Heart right ventricle (tissue), 16 donors: ENCODE measurements at regions of chr20 and their contacts with region 1.

Region 1: DNA sequence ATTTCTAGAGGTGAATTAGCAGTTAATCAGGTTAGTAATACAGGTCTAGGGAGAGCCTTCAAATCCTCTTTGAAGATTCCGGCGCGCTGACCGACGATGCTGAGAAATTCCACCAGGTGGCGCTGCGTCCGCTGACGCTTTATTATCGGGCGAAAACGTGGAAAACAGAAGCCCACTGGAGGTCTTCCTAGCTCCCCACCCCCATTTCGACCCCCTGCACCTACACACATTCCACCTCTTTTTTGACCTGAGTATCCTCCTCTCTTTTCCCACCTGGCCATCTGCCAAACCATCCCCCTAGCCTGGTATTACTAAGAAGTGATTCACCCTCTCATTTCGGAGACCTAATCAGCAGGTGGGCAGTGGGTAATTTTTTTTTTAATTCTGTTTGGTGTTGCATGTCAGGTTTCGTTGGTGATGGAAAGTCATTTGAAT is 65.4 kb upstream of the RIN2 start:
- DNase-seq: peak; percentile 42 to 61
- ATAC-seq: peak in 4 of 8 donors; percentile 12 to 39 (median 28)
- H3K4me3 ChIP-seq: peak overlapping the region in 1 of 10 donors; percentile 3
- H3K27ac ChIP-seq: no peak overlapping the region
- H3K4me1 ChIP-seq: peaks cover 0 to 47% (median 18%) of the 10 kb centered on the region in 9 donors
- H3K27me3 ChIP-seq: no peaks in the 10 kb centered on the region
- CTCF ChIP-seq: peak; percentile 88 to 95 (median 93)

Region 2: DNA sequence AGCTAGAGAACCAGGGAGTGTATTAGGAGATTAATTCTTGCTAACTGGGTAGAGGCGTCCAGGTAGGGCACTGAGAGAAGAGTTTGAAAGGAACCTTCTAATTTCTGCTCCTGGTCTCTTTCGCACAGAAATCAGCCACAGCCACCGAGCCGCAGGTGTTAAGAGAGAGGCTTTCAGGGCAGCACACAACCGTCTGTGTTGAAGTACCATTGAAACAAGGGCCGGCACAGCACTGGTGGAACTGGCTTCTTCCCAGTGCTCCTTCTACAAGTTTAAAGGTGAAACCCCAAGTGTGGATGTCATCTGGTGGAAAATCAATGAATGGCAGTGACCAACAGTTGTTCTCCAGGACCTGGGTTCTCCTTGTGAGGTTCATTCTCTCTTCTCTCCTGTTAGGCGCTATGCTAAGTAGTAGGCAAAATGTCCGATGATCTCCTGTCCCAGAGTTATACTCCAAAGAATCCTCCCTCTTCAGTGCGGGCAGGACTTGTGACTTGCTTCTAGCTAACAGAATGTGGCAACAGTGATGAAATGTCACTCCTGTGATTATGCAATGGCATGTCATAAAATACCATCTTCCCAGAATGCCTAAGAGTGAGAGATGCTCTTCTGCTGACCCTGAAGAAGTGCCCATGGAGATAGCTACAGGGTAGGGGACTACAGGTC is 50.4 kb after region 1 on chr20:
- intact Hi-C with region 1: loop called in 1 of 10 experiments (anchors 10 kb)
- DNase-seq: no peak
- ATAC-seq: peak in 1 of 8 donors; percentile 27
- H3K4me3 ChIP-seq: no peak overlapping the region
- H3K27ac ChIP-seq: no peak overlapping the region
- H3K4me1 ChIP-seq: peaks cover 0 to 10% (median 0%) of the 10 kb centered on the region in 9 donors
- H3K27me3 ChIP-seq: no peaks in the 10 kb centered on the region
- CTCF ChIP-seq: no peak

Region 3: DNA sequence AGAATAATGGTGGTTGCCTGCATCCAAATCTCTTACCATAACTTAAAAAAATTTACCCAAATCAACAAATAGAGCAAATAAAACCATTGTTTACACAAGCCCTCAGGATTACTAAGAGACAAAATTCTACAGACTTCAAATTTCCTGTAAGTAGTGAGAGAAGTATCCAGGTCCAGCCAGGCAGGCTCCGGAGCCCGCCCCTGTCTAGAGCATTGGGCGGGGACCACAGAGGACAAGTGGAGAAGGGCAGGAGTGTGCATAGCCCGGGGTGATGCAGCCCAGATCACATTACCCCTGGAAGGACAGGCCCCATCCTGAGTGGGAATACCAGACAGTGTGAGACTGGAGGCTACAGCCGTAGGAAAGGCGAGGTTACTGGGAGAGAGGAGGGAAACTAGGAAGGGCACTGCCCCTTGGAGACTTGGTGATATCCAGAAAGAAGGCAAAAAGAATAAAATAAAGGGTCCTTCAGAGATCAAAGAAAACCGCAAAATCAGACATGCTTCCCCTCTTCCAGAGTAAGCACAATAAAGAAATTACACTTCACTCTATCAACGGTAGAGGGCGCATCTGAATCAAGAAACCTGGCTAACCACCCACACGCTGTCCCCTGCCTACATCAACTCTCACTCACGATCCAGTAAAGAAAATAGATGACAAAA is 91.9 kb after region 1 on chr20:
- intact Hi-C with region 1: loop called in 6 of 10 experiments (anchors 5 to 10 kb)
- DNase-seq: peak; percentile 31 to 81
- ATAC-seq: peak; percentile 67 to 89 (median 82)
- H3K4me3 ChIP-seq: peak overlapping the region in 1 of 10 donors; percentile 1
- H3K27ac ChIP-seq: peak overlapping the region; percentile 32 to 91 (median 76)
- H3K4me1 ChIP-seq: peaks cover 28 to 67% (median 58%) of the 10 kb centered on the region in 9 donors
- H3K27me3 ChIP-seq: no peaks in the 10 kb centered on the region
- CTCF ChIP-seq: peak; percentile 59 to 87 (median 78)

Region 4: GRCh38 chr20:19889011-19889953 is 196.6 kb after region 1 on chr20:
- intact Hi-C with region 1: loop called in 6 of 10 experiments (anchors 2 to 10 kb)
- DNase-seq: peak; percentile 66 to 84
- ATAC-seq: peak; percentile 70 to 86 (median 80)
- H3K4me3 ChIP-seq: peak overlapping the region in 9 of 10 donors; percentile 30 to 58 (median 54)
- H3K27ac ChIP-seq: peak overlapping the region; percentile 72 to 98 (median 88)
- H3K4me1 ChIP-seq: peaks cover 29 to 97% (median 67%) of the 10 kb centered on the region in 9 donors
- H3K27me3 ChIP-seq: no peaks in the 10 kb centered on the region
- CTCF ChIP-seq: no peak

Region 5: GRCh38 chr20:19995220-19995863 is 302.6 kb after region 1 on chr20:
- intact Hi-C with region 1: loop called in 9 of 10 experiments (anchors 5 to 10 kb)
- DNase-seq: peak in 1 of 2 donors; percentile 47
- ATAC-seq: peak in 4 of 8 donors; percentile 27 to 54 (median 34)
- H3K4me3 ChIP-seq: no peak overlapping the region
- H3K27ac ChIP-seq: peak overlapping the region in 8 of 10 donors; percentile 15 to 81 (median 74)
- H3K4me1 ChIP-seq: peaks cover 42 to 99% (median 88%) of the 10 kb centered on the region in 9 donors
- H3K27me3 ChIP-seq: no peaks in the 10 kb centered on the region
- CTCF ChIP-seq: peak; percentile 59 to 88 (median 79)

Region 6: GRCh38 chr20:20052074-20052970 is 359.6 kb after region 1 on chr20 and contains the starts of genes CFAP61 and CRNKL1:
- intact Hi-C with region 1: loop called in 1 of 10 experiments (anchors 10 kb)
- DNase-seq: peak; percentile 95 to 97
- ATAC-seq: peak; percentile 98 to 99 (median 99)
- H3K4me3 ChIP-seq: peak within 1 kb of the TSS; percentile 72 to 99 (median 90)
- H3K27ac ChIP-seq: peak within 1 kb of the TSS; percentile 70 to 95 (median 83)
- H3K4me1 ChIP-seq: peaks cover 3 to 22% (median 14%) of the 10 kb centered on the region in 9 donors
- H3K27me3 ChIP-seq: no peaks in the 10 kb centered on the region
- CTCF ChIP-seq: peak in 1 of 9 donors; percentile 9
- total RNA-seq, gene CFAP61: 30.3 to 140 (median 68.2) TPM
- total RNA-seq, gene CRNKL1: 13.5 to 20.2 (median 18.1) TPM